Aorta (tissue), 5 donors: ENCODE measurements at regions of chr11 and their contacts with region 1.

Region 1: GRCh38 chr11:7089328-7090251 is 792 bp downstream of the RBMXL2 start:
- DNase-seq: peak; percentile 41 to 68
- ATAC-seq: peak; percentile 15
- H3K4me3 ChIP-seq: no peak overlapping the region
- H3K27ac ChIP-seq: no peak overlapping the region
- H3K4me1 ChIP-seq: no peaks in the 10 kb centered on the region
- H3K27me3 ChIP-seq: no peaks in the 10 kb centered on the region

Region 2: GRCh38 chr11:7046474-7047175 is 43.0 kb before region 1 on chr11:
- intact Hi-C with region 1: loop called in 1 of 2 experiments (anchors 5 kb)
- DNase-seq: no peak
- ATAC-seq: no peak
- H3K4me3 ChIP-seq: no peak overlapping the region
- H3K27ac ChIP-seq: no peak overlapping the region
- H3K4me1 ChIP-seq: no peaks in the 10 kb centered on the region
- H3K27me3 ChIP-seq: peaks cover 0 to 1% of the 10 kb centered on the region in 2 donors